ENCODE measurements at regions of chr3 and their contacts with region 1.

Region 1: GRCh38 chr3:57397175-57398026 is 104.9 kb upstream of the ASB14 start:
- DNase-seq: peak; percentile 22 to 77 (median 69)
- ATAC-seq: peak; percentile 98
- H3K4me3 ChIP-seq: peak overlapping the region; percentile 45
- H3K4me3 Mint-ChIP-seq: peak overlapping the region; percentile 39 to 75 (median 63)
- H3K27ac ChIP-seq: no peak overlapping the region
- H3K27ac Mint-ChIP-seq: peak overlapping the region; percentile 6 to 76 (median 66)
- H3K4me1 ChIP-seq: peaks cover 0 to 7% of the 10 kb centered on the region in 2 donors
- H3K4me1 Mint-ChIP-seq: peaks cover 8 to 26% (median 20%) of the 10 kb centered on the region in 7 donors
- H3K27me3 ChIP-seq: no peaks in the 10 kb centered on the region
- H3K27me3 Mint-ChIP-seq: peaks cover 0 to 25% (median 9%) of the 10 kb centered on the region in 5 donors

Region 2: DNA sequence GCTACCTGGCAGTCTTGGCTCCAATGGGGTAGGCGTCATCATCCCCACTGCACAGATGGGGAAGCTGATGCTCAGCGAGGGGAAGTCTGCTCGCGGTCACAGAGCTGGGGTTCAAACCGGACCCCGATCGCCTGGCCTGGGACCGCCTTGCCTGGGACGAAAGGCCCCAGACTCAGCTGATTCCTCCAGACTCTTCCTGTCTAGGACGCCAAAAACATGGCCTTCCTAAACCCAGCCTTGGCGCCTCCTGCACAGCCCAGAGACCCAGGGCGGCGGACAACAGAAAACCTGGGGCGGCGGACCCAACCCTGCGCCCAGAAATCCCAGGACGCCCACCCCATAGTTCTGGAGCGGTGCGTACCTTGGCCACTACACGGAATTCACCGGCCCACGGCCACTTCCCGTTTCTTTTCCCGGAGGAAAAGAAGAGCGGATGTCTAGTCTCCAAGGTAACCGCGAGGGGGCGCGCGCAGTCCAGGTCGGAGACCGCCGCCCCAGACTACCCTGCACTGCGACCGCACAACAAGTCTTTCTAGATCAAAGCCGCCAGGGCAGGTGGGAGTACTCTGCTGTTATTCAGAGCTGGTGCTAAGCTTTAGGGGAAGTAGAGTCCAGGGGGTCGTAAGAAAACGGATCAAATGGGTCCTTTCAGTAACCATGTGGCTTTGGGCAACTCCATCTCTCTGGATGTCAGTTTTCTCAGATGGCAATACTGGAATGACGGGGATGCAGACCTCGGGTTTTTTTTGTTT is 227.4 kb before region 1 on chr3:
- CTCF ChIA-PET with region 1: no interaction called
- POLR2A ChIA-PET with region 1: no interaction called
- intact Hi-C with region 1: loop called (anchors 10 kb)
- DNase-seq: peak; percentile 24 to 69 (median 48)
- ATAC-seq: peak; percentile 80
- H3K4me3 ChIP-seq: peak overlapping the region; percentile 22
- H3K4me3 Mint-ChIP-seq: peak overlapping the region; percentile 10 to 72 (median 46)
- H3K27ac ChIP-seq: no peak overlapping the region
- H3K27ac Mint-ChIP-seq: no peak overlapping the region
- H3K4me1 ChIP-seq: no peaks in the 10 kb centered on the region
- H3K4me1 Mint-ChIP-seq: peaks cover 0 to 11% (median 7%) of the 10 kb centered on the region in 7 donors
- H3K27me3 ChIP-seq: peaks cover 0 to 4% of the 10 kb centered on the region in 2 donors
- H3K27me3 Mint-ChIP-seq: peaks cover 50 to 72% (median 55%) of the 10 kb centered on the region in 5 donors

Region 3: DNA sequence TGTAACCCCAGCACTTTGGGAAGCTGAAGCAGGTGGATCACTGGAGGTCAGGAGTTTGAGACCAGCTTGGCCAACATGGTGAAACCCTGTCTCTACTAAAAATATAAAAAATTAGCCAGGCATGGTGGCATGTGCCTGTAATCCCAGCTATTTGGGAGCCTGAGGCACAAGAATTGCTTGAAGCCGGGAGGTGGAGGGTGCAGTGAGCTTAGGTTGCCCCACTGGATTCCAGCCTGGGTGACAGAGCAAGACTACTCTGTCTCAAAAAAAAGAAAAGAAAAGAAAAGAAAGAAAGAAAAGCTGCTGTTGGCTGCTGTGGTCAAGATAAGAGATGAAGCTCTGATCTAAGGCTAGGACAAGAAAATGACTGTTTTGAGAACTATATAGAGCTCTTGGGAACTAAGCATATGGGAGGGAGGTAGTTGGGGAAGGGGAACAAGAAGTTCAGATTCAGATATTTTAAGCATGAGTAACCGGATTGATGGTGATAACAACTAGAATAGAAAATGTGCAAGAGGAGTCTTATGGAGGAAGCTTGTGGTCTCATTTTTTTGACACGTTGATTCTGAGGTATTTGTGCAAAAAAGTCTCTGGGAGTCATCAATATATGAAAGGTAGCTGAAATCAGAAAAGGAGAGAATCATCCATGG is 121.0 kb after region 1 on chr3:
- CTCF ChIA-PET with region 1: no interaction called
- POLR2A ChIA-PET with region 1: no interaction called
- intact Hi-C with region 1: no loop called
- DNase-seq: no peak
- ATAC-seq: no peak
- H3K4me3 ChIP-seq: no peak overlapping the region
- H3K4me3 Mint-ChIP-seq: no peak overlapping the region
- H3K27ac ChIP-seq: no peak overlapping the region
- H3K27ac Mint-ChIP-seq: no peak overlapping the region
- H3K4me1 ChIP-seq: no peaks in the 10 kb centered on the region
- H3K4me1 Mint-ChIP-seq: peaks cover 0 to 5% (median 0%) of the 10 kb centered on the region in 7 donors
- H3K27me3 ChIP-seq: no peaks in the 10 kb centered on the region
- H3K27me3 Mint-ChIP-seq: peaks cover 4 to 16% (median 8%) of the 10 kb centered on the region in 5 donors

Region 4: DNA sequence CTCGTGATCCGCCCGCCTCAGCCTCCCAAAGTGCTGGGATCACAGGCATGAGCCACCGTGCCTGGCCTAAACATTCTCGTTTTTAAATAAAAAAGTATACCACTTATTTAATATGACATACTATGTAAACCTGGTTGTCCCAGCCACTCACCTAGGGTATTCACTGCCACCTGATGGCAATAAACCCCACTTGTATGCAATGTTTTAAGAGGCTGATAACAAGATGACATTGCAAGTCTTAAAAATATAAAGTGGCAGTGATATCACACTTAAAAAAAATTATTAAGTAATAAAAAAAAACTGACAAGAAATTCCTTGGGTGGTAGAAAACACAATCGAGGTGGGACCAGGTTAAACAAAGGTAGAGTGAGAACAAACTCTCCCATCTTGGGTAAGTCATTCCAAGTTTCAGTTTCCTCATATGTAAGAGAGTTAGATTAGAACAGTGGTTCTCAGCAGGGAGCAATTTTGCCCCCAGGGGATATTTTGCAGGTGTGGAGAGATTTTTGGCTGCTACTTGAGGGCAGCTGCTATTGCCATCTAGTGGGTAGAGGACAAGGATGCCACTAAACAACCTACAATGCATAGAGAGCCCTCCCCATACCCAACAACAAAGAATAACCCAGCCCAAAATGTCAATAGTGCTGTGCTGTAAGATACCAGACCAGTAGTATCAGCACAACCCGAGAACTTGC is 185.2 kb after region 1 on chr3:
- CTCF ChIA-PET with region 1: interaction called, 3 read pairs
- POLR2A ChIA-PET with region 1: no interaction called
- intact Hi-C with region 1: loop called in 1 of 2 experiments (anchors 2 kb)
- DNase-seq: peak in 2 of 9 donors; percentile 7
- ATAC-seq: peak; percentile 73
- H3K4me3 ChIP-seq: no peak overlapping the region
- H3K4me3 Mint-ChIP-seq: no peak overlapping the region
- H3K27ac ChIP-seq: no peak overlapping the region
- H3K27ac Mint-ChIP-seq: peak overlapping the region in 5 of 9 donors; percentile 32 to 76 (median 65)
- H3K4me1 ChIP-seq: peaks cover 0 to 7% of the 10 kb centered on the region in 2 donors
- H3K4me1 Mint-ChIP-seq: peaks cover 7 to 43% (median 33%) of the 10 kb centered on the region in 7 donors
- H3K27me3 ChIP-seq: no peaks in the 10 kb centered on the region
- H3K27me3 Mint-ChIP-seq: no peaks in the 10 kb centered on the region

Region 5: DNA sequence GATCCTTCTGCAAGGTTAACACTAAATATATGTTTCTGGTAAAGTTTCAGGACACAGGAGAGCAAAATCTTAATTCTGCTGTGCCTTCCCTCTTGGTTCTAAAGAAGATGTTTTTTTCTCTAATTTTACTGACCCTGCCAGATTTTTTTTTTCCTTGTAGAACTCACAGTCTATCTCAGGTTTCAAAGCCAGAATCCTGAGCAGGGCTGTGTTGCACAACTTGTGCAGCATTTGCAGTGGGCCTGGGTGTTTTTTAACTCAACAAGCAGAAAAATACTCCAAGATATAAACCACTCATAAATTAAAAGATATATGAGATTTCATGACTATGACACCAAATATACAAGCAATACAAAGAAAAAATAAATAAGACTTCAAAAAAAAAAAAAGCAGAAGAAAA is 240.0 kb after region 1 on chr3:
- CTCF ChIA-PET with region 1: interaction called, 6 read pairs
- POLR2A ChIA-PET with region 1: no interaction called
- intact Hi-C with region 1: loop called in 1 of 2 experiments (anchors 10 kb)
- DNase-seq: no peak
- ATAC-seq: no peak
- H3K4me3 ChIP-seq: no peak overlapping the region
- H3K4me3 Mint-ChIP-seq: no peak overlapping the region
- H3K27ac ChIP-seq: no peak overlapping the region
- H3K27ac Mint-ChIP-seq: no peak overlapping the region
- H3K4me1 ChIP-seq: no peaks in the 10 kb centered on the region
- H3K4me1 Mint-ChIP-seq: peaks cover 0 to 9% (median 0%) of the 10 kb centered on the region in 7 donors
- H3K27me3 ChIP-seq: no peaks in the 10 kb centered on the region
- H3K27me3 Mint-ChIP-seq: no peaks in the 10 kb centered on the region

Region 6: DNA sequence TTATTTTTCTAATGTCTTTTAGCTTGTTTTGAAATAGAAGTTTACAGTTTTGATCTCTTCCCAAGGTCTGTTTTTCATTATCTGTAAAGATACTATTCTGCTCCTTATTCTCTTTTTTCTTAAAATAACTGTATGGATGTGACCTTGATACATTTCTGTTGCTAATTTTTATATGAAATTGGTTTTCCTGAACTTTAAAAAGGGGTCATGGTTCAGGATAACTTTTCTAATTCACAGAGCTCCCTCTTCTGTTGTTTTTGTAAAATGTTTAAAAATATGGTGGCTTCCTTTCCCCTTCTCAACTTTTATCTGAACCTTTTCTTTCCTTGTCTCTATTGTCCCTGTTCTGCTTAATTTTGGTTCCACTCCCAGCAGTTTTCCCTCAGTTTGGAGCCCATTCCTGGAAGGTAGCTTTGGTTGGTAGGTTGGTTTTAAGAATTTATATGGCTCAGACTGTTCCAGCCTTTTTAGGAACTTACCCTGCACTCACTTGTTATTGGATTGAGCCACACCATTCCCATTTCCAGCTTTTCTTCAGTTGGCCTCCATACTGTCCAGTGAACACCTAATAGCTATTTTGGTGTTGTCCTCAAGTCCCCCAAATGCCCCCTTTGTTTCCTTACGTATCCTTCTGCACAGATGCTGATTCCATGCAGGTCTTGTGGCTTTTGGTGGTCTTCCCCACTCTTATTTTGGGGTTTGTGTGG is 429.0 kb after region 1 on chr3:
- CTCF ChIA-PET with region 1: interaction called, 10 read pairs
- POLR2A ChIA-PET with region 1: no interaction called
- intact Hi-C with region 1: loop called in 1 of 2 experiments (anchors 1 kb)
- DNase-seq: peak in 1 of 9 donors; percentile 22
- ATAC-seq: no peak
- H3K4me3 ChIP-seq: no peak overlapping the region
- H3K4me3 Mint-ChIP-seq: peak overlapping the region in 1 of 10 donors; percentile 22
- H3K27ac ChIP-seq: no peak overlapping the region
- H3K27ac Mint-ChIP-seq: peak overlapping the region in 5 of 9 donors; percentile 14 to 62 (median 51)
- H3K4me1 ChIP-seq: peaks cover 0 to 4% of the 10 kb centered on the region in 2 donors
- H3K4me1 Mint-ChIP-seq: peaks cover 6 to 43% (median 37%) of the 10 kb centered on the region in 7 donors
- H3K27me3 ChIP-seq: no peaks in the 10 kb centered on the region
- H3K27me3 Mint-ChIP-seq: no peaks in the 10 kb centered on the region

Region 7: GRCh38 chr3:57910988-57911387 is 513.6 kb after region 1 on chr3:
- CTCF ChIA-PET with region 1: interaction called, 6 read pairs
- POLR2A ChIA-PET with region 1: no interaction called
- intact Hi-C with region 1: loop called (anchors 1 kb)
- DNase-seq: peak in 5 of 9 donors; percentile 5 to 25 (median 17)
- ATAC-seq: no peak
- H3K4me3 ChIP-seq: no peak overlapping the region
- H3K4me3 Mint-ChIP-seq: no peak overlapping the region
- H3K27ac ChIP-seq: no peak overlapping the region
- H3K27ac Mint-ChIP-seq: no peak overlapping the region
- H3K4me1 ChIP-seq: no peaks in the 10 kb centered on the region
- H3K4me1 Mint-ChIP-seq: peaks cover 0 to 2% (median 0%) of the 10 kb centered on the region in 7 donors
- H3K27me3 ChIP-seq: no peaks in the 10 kb centered on the region
- H3K27me3 Mint-ChIP-seq: no peaks in the 10 kb centered on the region

Measured in naive thymus-derived CD4-positive, alpha-beta T cell (primary cell).